A673 (cell line): ENCODE measurements at regions of chr6 and their contacts with region 1.

Region 1: DNA sequence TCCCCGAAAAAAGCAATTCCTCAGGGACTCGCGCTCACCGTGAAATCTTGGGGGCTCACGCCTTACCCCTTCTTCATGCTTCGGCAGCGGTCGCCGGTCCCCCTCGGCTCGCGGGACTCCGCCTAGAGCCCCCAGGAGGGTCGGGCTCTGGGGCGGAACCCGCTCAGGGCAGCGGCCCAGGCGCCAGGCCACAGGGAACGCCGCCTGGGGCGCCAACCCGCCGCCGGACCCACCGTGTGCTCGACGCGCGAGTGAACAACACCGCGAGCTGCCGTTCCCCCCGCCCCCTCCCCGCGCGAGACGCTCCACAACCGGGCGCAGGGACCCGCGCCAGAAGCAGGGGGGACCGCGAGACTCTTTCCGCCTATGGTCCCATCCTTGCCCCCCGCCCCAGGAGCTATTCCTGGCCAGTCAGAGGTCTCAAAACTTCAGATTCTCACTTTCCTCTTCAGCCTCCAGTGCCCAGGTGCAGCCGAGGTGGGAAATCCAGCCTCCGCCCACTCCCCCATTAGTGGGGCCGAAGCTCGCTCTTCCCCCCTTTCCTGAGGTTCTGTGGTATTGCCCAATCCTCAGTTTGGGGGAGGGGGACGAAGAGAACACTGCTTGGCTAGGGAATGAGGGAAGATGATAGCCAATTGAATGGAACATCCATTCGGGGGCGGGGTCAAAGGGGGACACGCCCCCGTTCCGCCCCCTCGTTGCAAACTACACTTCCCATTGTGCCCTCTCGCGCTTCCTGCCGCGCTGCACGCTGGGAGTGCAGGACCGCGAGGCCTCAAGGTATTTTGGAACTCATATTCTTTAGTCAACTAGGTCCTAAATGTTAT is at the start of gene WASF1:
- DNase-seq: peak; percentile 99
- H3K4me3 ChIP-seq: peak within 1 kb of the TSS; percentile 68
- H3K27ac ChIP-seq: peak within 1 kb of the TSS; percentile 99
- H3K4me1 ChIP-seq: peaks cover 35% of the 10 kb centered on the region
- H3K27me3 ChIP-seq: no peaks in the 10 kb centered on the region
- CTCF ChIP-seq: no peak
- total RNA-seq, gene WASF1: 159 and 165 TPM in 2 replicates

Region 2: GRCh38 chr6:110140650-110141049 is 39.0 kb before region 1 on chr6:
- CTCF ChIA-PET with region 1: no interaction called
- POLR2A ChIA-PET with region 1: interaction called, 11 read pairs
- intact Hi-C with region 1: no loop called
- DNase-seq: peak; percentile 30
- H3K4me3 ChIP-seq: no peak overlapping the region
- H3K27ac ChIP-seq: peak overlapping the region; percentile 31
- H3K4me1 ChIP-seq: no peaks in the 10 kb centered on the region
- H3K27me3 ChIP-seq: no peaks in the 10 kb centered on the region
- CTCF ChIP-seq: no peak

Region 3: DNA sequence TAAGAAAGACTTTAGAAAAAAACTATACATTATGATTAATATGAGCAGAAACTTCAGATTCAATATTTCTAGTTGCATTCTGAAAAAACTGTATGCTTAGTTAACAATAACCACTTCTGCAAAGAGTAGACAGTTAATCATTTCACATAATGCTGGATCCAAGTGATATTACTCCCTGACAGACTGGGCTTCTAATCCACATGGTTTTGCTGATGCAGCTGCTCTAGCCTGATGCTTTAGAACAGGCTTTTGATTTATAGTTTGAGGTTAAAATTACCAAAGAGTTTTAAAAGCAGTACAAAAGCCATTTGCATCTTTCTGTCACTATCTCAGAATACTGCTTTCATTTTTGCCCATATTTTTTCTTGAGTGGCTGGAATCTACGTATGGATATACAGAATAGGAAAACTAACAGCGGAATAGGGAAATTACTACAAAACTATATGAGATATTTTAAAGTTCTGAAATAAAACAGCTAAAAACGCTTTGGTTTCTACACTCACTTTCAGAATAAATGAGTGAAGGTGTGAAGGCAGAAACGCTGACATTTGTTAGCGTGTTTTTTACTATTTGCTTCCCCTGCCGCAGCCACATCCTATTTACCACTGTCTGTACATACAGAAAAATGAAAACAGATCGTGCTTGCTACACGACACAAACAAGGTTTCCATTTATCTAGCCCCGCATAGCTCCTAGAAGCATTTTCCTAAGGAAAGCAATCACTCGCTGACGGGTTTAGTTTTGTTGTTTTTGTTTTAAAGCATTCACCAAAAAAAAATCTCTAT is 116.8 kb after region 1 on chr6:
- CTCF ChIA-PET with region 1: interaction called, 3 read pairs
- POLR2A ChIA-PET with region 1: no interaction called
- intact Hi-C with region 1: loop called (anchors 2 kb)
- DNase-seq: peak; percentile 92
- H3K4me3 ChIP-seq: peak overlapping the region; percentile 35
- H3K27ac ChIP-seq: peak overlapping the region; percentile 98
- H3K4me1 ChIP-seq: peaks cover 63% of the 10 kb centered on the region
- H3K27me3 ChIP-seq: no peaks in the 10 kb centered on the region
- CTCF ChIP-seq: no peak

Region 4: GRCh38 chr6:110357664-110358552 is 178.3 kb after region 1 on chr6 and contains the start of gene METTL24:
- CTCF ChIA-PET with region 1: interaction called, 4 read pairs
- POLR2A ChIA-PET with region 1: no interaction called
- intact Hi-C with region 1: loop called (anchors 10 kb)
- DNase-seq: peak; percentile 49
- H3K4me3 ChIP-seq: peak within 1 kb of the TSS; percentile 51
- H3K27ac ChIP-seq: peak within 1 kb of the TSS; percentile 76
- H3K4me1 ChIP-seq: peaks cover 50% of the 10 kb centered on the region
- H3K27me3 ChIP-seq: no peaks in the 10 kb centered on the region
- CTCF ChIP-seq: no peak
- total RNA-seq, gene METTL24: 6.4 and 9.0 TPM in 2 replicates

Region 5: GRCh38 chr6:110958329-110959192 is 778.9 kb after region 1 on chr6 and contains the start of gene GTF3C6:
- CTCF ChIA-PET with region 1: no interaction called
- POLR2A ChIA-PET with region 1: no interaction called
- intact Hi-C with region 1: loop called (anchors 10 kb)
- DNase-seq: peak; percentile 95
- H3K4me3 ChIP-seq: peak within 1 kb of the TSS; percentile 78
- H3K27ac ChIP-seq: peak within 1 kb of the TSS; percentile 96
- H3K4me1 ChIP-seq: peaks cover 4% of the 10 kb centered on the region
- H3K27me3 ChIP-seq: no peaks in the 10 kb centered on the region
- CTCF ChIP-seq: no peak
- total RNA-seq, gene GTF3C6: 158 and 199 TPM in 2 replicates